ENCODE measurements at regions of chr12 and their contacts with region 1.

Region 1: DNA sequence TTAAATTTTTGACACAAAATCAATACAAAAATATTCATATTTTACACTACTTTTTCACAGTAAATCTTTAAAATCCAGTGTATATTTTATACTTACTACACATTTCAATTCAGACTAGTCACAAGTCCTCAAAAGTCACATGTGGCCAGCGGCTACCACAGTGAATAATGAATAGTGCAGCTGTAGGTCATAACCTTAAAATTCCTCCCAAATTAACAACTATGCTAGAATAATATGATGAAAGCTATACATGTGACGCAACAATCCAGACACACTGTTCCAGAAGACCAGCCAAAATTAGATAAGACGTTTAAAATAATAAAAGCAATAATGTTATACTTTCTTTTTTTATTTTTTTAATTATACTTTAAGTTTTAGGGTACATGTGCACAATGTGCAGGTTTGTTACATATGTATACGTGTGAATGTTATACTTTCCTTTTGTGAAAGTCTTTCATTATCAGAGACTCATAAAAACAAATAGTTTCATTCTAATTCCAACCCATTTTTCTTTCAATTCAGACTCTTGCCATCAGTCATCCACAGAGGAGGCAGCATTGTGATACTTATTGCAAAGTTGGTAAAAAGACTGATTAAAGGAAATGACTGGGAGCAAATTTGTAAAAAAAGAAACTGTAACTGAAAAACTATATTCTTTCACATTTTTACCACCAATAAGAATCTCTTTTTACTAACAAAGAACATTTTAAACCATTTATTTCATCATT is 67.0 kb downstream of the C2CD5 start:
- DNase-seq: no peak
- ATAC-seq: no peak
- H3K4me3 ChIP-seq: no peak overlapping the region
- H3K27ac ChIP-seq: 0 out of 2 replicates have a peak overlapping the region, but pooled peaks have one; percentile 27
- H3K4me1 ChIP-seq: no peaks in the 10 kb centered on the region; the same call in 1 of the 2 replicates
- H3K27me3 ChIP-seq: no peaks in the 10 kb centered on the region
- CTCF ChIP-seq: no peak
- EP300 ChIP-seq: no peak
- POLR2A ChIP-seq: no peak
- RAD21 ChIP-seq: no peak

Region 2: GRCh38 chr12:22467190-22467589 is 10.1 kb before region 1 on chr12:
- CTCF ChIA-PET with region 1: no interaction called
- POLR2A ChIA-PET with region 1: no interaction called
- RAD21 ChIA-PET with region 1: no interaction called
- SMC1A ChIA-PET with region 1: interaction called, 10 read pairs
- in situ Hi-C with region 1: no loop called
- intact Hi-C with region 1: no loop called
- DNase-seq: no peak
- ATAC-seq: no peak
- H3K4me3 ChIP-seq: no peak overlapping the region
- H3K27ac ChIP-seq: no peak overlapping the region
- H3K4me1 ChIP-seq: no peaks in the 10 kb centered on the region
- H3K27me3 ChIP-seq: no peaks in the 10 kb centered on the region
- CTCF ChIP-seq: no peak
- EP300 ChIP-seq: no peak
- POLR2A ChIP-seq: no peak
- RAD21 ChIP-seq: no peak

Region 3: DNA sequence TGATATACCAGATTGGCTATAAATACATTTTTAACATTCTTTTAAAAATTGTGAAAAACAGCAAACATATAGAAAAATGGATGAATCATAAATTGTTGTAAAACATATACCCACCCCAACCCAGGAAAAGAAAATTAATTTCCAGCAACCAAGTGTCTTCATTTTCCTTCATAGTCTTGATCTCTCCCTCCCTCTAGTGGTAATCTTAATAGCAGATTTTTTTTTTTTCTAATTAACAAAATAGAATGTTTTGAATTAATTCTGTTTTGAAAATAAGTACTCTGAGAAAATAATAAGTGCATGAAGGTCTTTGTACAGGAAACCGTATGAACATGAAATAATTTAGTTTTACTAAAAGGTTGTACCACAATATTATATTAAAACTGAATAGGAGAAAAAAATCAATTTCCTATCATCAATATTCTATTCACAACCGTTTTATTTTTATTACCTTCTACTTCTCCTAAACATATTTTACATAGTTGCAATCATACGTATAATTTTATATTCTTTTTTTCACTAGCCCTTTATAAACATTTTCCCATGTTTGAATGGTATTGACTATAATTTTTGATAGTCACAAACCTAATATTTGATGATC is 154.6 kb after region 1 on chr12:
- CTCF ChIA-PET with region 1: interaction called, 3 read pairs
- POLR2A ChIA-PET with region 1: no interaction called
- RAD21 ChIA-PET with region 1: no interaction called
- SMC1A ChIA-PET with region 1: no interaction called
- in situ Hi-C with region 1: no loop called
- intact Hi-C with region 1: loop called (anchors 5 kb)
- DNase-seq: no peak
- ATAC-seq: peak; percentile 18; the same call in 2 of the 3 replicates
- H3K4me3 ChIP-seq: no peak overlapping the region
- H3K27ac ChIP-seq: no peak overlapping the region
- H3K4me1 ChIP-seq: no peaks in the 10 kb centered on the region
- H3K27me3 ChIP-seq: no peaks in the 10 kb centered on the region
- CTCF ChIP-seq: peak; percentile 38 to 52 (median 51); a peak in 5 of 6 replicates
- EP300 ChIP-seq: no peak
- POLR2A ChIP-seq: no peak
- RAD21 ChIP-seq: peak; percentile 52